MCF 10A (cell line): ENCODE measurements at regions of chr12 and their contacts with region 1.

Region 1: DNA sequence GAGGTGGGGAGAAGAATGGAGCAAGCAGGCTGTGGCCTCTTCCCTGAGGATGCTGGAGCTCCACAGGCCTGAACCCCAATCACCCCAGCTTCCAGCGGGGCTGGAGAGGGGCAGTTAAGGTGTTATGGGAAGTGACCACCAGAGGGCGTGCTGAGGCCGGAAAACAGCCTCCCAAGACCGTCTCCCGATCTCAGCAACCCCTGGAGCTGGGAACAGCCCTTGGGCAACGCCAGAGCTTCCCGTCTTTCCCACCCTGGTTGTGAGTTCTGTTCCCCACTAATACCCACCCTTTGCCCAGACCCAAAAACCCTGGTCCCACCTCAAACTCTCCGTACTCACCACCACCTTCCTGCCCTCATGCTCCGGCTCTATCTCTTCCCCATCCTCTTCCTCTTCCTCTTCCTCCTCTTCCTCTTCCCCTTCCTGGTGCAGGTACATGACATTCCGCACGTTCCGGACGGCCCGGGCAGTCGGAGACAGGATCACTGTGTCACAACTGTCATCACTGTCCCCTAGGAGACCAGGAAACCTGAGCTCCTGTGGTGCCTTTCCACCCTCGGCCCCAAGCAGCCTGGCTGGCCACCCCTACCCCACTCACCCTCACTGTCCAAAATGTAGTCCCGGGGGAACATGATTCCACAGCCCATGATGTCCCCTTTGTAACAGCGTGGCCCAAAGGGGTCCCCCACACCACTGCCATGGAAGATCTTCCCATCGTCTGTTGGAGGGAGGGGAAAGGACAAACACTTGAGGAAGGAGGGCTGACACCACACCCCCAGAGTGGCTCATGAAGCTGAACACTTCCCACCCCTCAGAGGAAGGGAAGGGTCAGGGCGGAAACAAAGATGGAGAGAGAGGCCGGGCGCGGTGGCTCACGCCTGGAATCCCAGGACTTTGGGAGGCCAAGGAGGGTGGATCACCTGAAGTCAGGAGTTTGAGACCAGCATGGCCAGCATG is 12.9 kb downstream of the SPRYD3 start:
- DNase-seq: peak; percentile 81
- H3K4me3 Mint-ChIP-seq: no peak overlapping the region
- H3K27ac Mint-ChIP-seq: no peak overlapping the region
- H3K4me1 Mint-ChIP-seq: peaks cover 11% of the 10 kb centered on the region
- H3K27me3 Mint-ChIP-seq: no peaks in the 10 kb centered on the region
- CTCF ChIP-seq: peak; percentile 78

Region 2: GRCh38 chr12:52848661-52849255 is 217.5 kb before region 1 on chr12 and contains the start of gene KRT78:
- CTCF ChIA-PET with region 1: no interaction called
- POLR2A ChIA-PET with region 1: no interaction called
- intact Hi-C with region 1: no loop called
- DNase-seq: no peak
- H3K4me3 Mint-ChIP-seq: no peak within 1 kb of the TSS
- H3K27ac Mint-ChIP-seq: peak within 1 kb of the TSS; percentile 68
- H3K4me1 Mint-ChIP-seq: no peaks in the 10 kb centered on the region
- H3K27me3 Mint-ChIP-seq: peaks cover 38% of the 10 kb centered on the region
- CTCF ChIP-seq: no peak
- total RNA-seq, gene KRT78: not detected in 2 replicates

Region 3: GRCh38 chr12:53054112-53054833 is 12.0 kb before region 1 on chr12:
- CTCF ChIA-PET with region 1: interaction called, 25 read pairs
- POLR2A ChIA-PET with region 1: interaction called, 6 read pairs
- intact Hi-C with region 1: no loop called
- DNase-seq: peak; percentile 98
- H3K4me3 Mint-ChIP-seq: peak overlapping the region; percentile 80
- H3K27ac Mint-ChIP-seq: peak overlapping the region; percentile 97
- H3K4me1 Mint-ChIP-seq: peaks cover 32% of the 10 kb centered on the region
- H3K27me3 Mint-ChIP-seq: no peaks in the 10 kb centered on the region
- CTCF ChIP-seq: no peak

Region 4: GRCh38 chr12:53098982-53099651 is 32.9 kb after region 1 on chr12:
- CTCF ChIA-PET with region 1: interaction called, 267 read pairs
- POLR2A ChIA-PET with region 1: interaction called, 39 read pairs
- intact Hi-C with region 1: loop called (anchors 1 kb)
- DNase-seq: peak; percentile 92
- H3K4me3 Mint-ChIP-seq: peak overlapping the region; percentile 73
- H3K27ac Mint-ChIP-seq: peak overlapping the region; percentile 76
- H3K4me1 Mint-ChIP-seq: peaks cover 26% of the 10 kb centered on the region
- H3K27me3 Mint-ChIP-seq: no peaks in the 10 kb centered on the region
- CTCF ChIP-seq: peak; percentile 92

Region 5: GRCh38 chr12:53159195-53159839 is 93.1 kb after region 1 on chr12:
- CTCF ChIA-PET with region 1: interaction called, 12 read pairs
- POLR2A ChIA-PET with region 1: no interaction called
- intact Hi-C with region 1: no loop called
- DNase-seq: peak; percentile 85
- H3K4me3 Mint-ChIP-seq: no peak overlapping the region
- H3K27ac Mint-ChIP-seq: no peak overlapping the region
- H3K4me1 Mint-ChIP-seq: peaks cover 8% of the 10 kb centered on the region
- H3K27me3 Mint-ChIP-seq: no peaks in the 10 kb centered on the region
- CTCF ChIP-seq: peak; percentile 94

Region 6: GRCh38 chr12:53190108-53190729 is 124.0 kb after region 1 on chr12:
- CTCF ChIA-PET with region 1: interaction called, 8 read pairs
- POLR2A ChIA-PET with region 1: interaction called, 4 read pairs
- intact Hi-C with region 1: loop called (anchors 2 kb)
- DNase-seq: peak; percentile 68
- H3K4me3 Mint-ChIP-seq: no peak overlapping the region
- H3K27ac Mint-ChIP-seq: no peak overlapping the region
- H3K4me1 Mint-ChIP-seq: peaks cover 2% of the 10 kb centered on the region
- H3K27me3 Mint-ChIP-seq: no peaks in the 10 kb centered on the region
- CTCF ChIP-seq: peak; percentile 72

Region 7: GRCh38 chr12:53287741-53288216 is 221.5 kb after region 1 on chr12:
- CTCF ChIA-PET with region 1: interaction called, 14 read pairs
- POLR2A ChIA-PET with region 1: interaction called, 3 read pairs
- intact Hi-C with region 1: no loop called
- DNase-seq: peak; percentile 61
- H3K4me3 Mint-ChIP-seq: no peak overlapping the region
- H3K27ac Mint-ChIP-seq: peak overlapping the region; percentile 24
- H3K4me1 Mint-ChIP-seq: peaks cover 6% of the 10 kb centered on the region
- H3K27me3 Mint-ChIP-seq: no peaks in the 10 kb centered on the region
- CTCF ChIP-seq: peak; percentile 74

Region 8: DNA sequence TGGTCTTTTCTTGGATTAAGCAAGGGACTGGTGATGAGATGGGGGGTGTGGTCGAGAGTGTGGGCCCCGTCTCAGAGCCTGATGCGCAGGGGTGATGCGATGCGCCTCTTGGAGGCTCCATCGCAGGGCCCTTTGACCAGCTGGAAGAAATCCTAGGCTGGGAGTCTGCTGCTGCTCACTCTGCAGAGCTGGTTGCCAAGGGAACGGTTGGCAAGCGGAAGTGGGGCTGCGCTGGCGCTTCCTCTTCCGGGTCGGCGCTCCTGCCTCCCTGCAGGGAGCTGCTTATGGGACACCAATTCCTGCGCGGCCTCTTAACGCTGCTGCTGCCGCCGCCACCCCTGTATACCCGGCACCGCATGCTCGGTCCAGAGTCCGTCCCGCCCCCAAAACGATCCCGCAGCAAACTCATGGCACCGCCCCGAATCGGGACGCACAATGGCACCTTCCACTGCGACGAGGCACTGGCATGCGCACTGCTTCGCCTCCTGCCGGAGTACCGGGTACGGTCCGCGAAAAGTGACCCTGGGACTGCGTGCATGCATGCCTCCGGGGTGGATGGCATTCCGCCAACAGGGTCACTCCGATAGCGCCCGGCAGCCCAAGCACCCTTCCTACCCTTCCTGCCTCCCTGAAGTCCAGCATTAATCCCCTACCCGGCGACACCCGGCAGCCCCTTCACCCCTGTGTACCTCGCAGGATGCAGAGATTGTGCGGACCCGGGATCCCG is 233.4 kb after region 1 on chr12 and contains the start of gene MYG1:
- CTCF ChIA-PET with region 1: no interaction called
- POLR2A ChIA-PET with region 1: no interaction called
- intact Hi-C with region 1: no loop called
- DNase-seq: peak; percentile 80
- H3K4me3 Mint-ChIP-seq: peak within 1 kb of the TSS; percentile 82
- H3K27ac Mint-ChIP-seq: peak within 1 kb of the TSS; percentile 92
- H3K4me1 Mint-ChIP-seq: peaks cover 41% of the 10 kb centered on the region
- H3K27me3 Mint-ChIP-seq: no peaks in the 10 kb centered on the region
- CTCF ChIP-seq: no peak
- total RNA-seq, gene MYG1: 79.8 and 80.9 TPM in 2 replicates